Endothelial cell of umbilical vein (primary cell): ENCODE measurements at regions of chr19 and their contacts with region 1.

Region 1: GRCh38 chr19:52028027-52028779 is at the start of gene ZNF614:
- DNase-seq: peak; percentile 92
- H3K4me3 ChIP-seq: peak within 1 kb of the TSS; percentile 59 to 90 (median 87)
- H3K27ac ChIP-seq: peak within 1 kb of the TSS; percentile 93
- H3K4me1 ChIP-seq: peaks cover 6% of the 10 kb centered on the region
- H3K27me3 ChIP-seq: no peaks in the 10 kb centered on the region
- CTCF ChIP-seq: no peak
- POLR2A ChIP-seq: peak; percentile 86
- total RNA-seq, gene ZNF614: 5.6 and 7.8 TPM in 2 replicates

Region 2: GRCh38 chr19:51948975-51949374 is 79.2 kb before region 1 on chr19:
- CTCF ChIA-PET with region 1: no interaction called
- POLR2A ChIA-PET with region 1: no interaction called
- dilution Hi-C with region 1: no loop called
- intact Hi-C with region 1: no loop called
- DNase-seq: no peak
- H3K4me3 ChIP-seq: no peak overlapping the region
- H3K27ac ChIP-seq: no peak overlapping the region
- H3K4me1 ChIP-seq: no peaks in the 10 kb centered on the region
- H3K27me3 ChIP-seq: no peaks in the 10 kb centered on the region
- CTCF ChIP-seq: no peak
- POLR2A ChIP-seq: no peak

Region 3: GRCh38 chr19:51986309-51987291 is 41.6 kb before region 1 on chr19 and contains the start of gene ZNF350:
- CTCF ChIA-PET with region 1: no interaction called
- POLR2A ChIA-PET with region 1: no interaction called
- dilution Hi-C with region 1: no loop called
- intact Hi-C with region 1: loop called (anchors 1 kb)
- DNase-seq: peak; percentile 95
- H3K4me3 ChIP-seq: peak within 1 kb of the TSS; percentile 58 to 80 (median 61)
- H3K27ac ChIP-seq: peak within 1 kb of the TSS; percentile 48
- H3K4me1 ChIP-seq: peaks cover 2% of the 10 kb centered on the region
- H3K27me3 ChIP-seq: no peaks in the 10 kb centered on the region
- CTCF ChIP-seq: no peak
- POLR2A ChIP-seq: no peak
- total RNA-seq, gene ZNF350: 8.4 and 9.8 TPM in 2 replicates

Region 4: DNA sequence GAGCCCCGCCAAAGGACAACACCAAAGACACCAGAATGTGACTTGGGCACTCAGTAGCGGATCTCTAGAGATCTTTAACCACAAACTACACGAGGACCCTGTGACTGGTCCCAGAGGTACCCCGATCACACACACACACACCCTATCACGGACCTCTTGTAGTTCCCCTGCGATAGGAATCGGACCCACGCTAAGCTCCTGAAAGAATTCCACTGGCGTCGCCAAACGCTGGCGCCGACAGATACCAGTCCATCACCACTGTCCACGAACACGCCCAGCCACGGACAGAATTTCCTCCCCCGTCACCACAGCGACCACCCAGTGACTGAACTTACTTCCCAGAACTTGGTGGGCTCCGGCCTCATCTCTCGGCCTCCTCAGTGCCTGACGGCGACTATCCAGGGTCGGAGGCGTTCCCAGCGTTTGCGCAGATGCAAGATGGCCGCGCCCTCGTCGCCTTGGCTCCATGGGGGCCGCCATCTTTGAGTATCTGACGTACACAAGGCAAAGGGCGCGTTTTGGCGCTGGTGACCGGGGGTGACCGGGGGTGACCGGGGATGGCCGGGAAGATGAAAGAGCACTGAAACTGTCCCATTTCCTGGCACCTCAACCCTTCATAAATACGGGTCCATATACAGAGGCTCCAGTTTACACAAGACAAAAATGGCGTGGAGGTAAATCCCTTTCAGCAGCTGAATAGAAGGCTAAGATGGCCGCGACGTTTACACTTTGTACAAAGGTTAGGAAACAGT is 20.2 kb before region 1 on chr19 and contains the start of gene ZNF615:
- CTCF ChIA-PET with region 1: no interaction called
- POLR2A ChIA-PET with region 1: interaction called, 4 read pairs
- dilution Hi-C with region 1: no loop called
- intact Hi-C with region 1: loop called (anchors 1 kb)
- DNase-seq: peak; percentile 91
- H3K4me3 ChIP-seq: peak within 1 kb of the TSS; percentile 57 to 76 (median 69)
- H3K27ac ChIP-seq: peak within 1 kb of the TSS; percentile 83
- H3K4me1 ChIP-seq: peaks cover 7% of the 10 kb centered on the region
- H3K27me3 ChIP-seq: no peaks in the 10 kb centered on the region
- CTCF ChIP-seq: no peak
- POLR2A ChIP-seq: no peak
- total RNA-seq, gene ZNF615: 4.5 and 5.1 TPM in 2 replicates

Region 5: GRCh38 chr19:52048555-52049501 is 20.6 kb after region 1 on chr19 and contains the start of gene ZNF432:
- CTCF ChIA-PET with region 1: no interaction called
- POLR2A ChIA-PET with region 1: interaction called, 5 read pairs
- dilution Hi-C with region 1: no loop called
- intact Hi-C with region 1: loop called (anchors 1 kb)
- DNase-seq: peak; percentile 94
- H3K4me3 ChIP-seq: peak within 1 kb of the TSS; percentile 60 to 89 (median 75)
- H3K27ac ChIP-seq: peak within 1 kb of the TSS; percentile 92
- H3K4me1 ChIP-seq: peaks cover 4% of the 10 kb centered on the region
- H3K27me3 ChIP-seq: no peaks in the 10 kb centered on the region
- CTCF ChIP-seq: no peak
- POLR2A ChIP-seq: no peak
- total RNA-seq, gene ZNF432: 8.9 and 10.9 TPM in 2 replicates

Region 6: GRCh38 chr19:52095172-52096014 is 67.2 kb after region 1 on chr19 and contains the start of gene ZNF841:
- CTCF ChIA-PET with region 1: no interaction called
- POLR2A ChIA-PET with region 1: no interaction called
- dilution Hi-C with region 1: no loop called
- intact Hi-C with region 1: loop called (anchors 2 kb)
- DNase-seq: peak; percentile 96
- H3K4me3 ChIP-seq: peak within 1 kb of the TSS; percentile 47 to 94 (median 70)
- H3K27ac ChIP-seq: peak within 1 kb of the TSS; percentile 62
- H3K4me1 ChIP-seq: peaks cover 2% of the 10 kb centered on the region
- H3K27me3 ChIP-seq: no peaks in the 10 kb centered on the region
- CTCF ChIP-seq: no peak
- POLR2A ChIP-seq: peak; percentile 63
- total RNA-seq, gene ZNF841: 17.7 and 18.6 TPM in 2 replicates

Region 7: GRCh38 chr19:52237771-52238400 is 209.7 kb after region 1 on chr19:
- CTCF ChIA-PET with region 1: no interaction called
- POLR2A ChIA-PET with region 1: no interaction called
- dilution Hi-C with region 1: no loop called
- intact Hi-C with region 1: loop called (anchors 5 kb)
- DNase-seq: peak; percentile 69
- H3K4me3 ChIP-seq: no peak overlapping the region
- H3K27ac ChIP-seq: no peak overlapping the region
- H3K4me1 ChIP-seq: no peaks in the 10 kb centered on the region
- H3K27me3 ChIP-seq: no peaks in the 10 kb centered on the region
- CTCF ChIP-seq: peak; percentile 76 to 86
- POLR2A ChIP-seq: no peak